ENCODE measurements at regions of chrX and their contacts with region 1.

Region 1: DNA sequence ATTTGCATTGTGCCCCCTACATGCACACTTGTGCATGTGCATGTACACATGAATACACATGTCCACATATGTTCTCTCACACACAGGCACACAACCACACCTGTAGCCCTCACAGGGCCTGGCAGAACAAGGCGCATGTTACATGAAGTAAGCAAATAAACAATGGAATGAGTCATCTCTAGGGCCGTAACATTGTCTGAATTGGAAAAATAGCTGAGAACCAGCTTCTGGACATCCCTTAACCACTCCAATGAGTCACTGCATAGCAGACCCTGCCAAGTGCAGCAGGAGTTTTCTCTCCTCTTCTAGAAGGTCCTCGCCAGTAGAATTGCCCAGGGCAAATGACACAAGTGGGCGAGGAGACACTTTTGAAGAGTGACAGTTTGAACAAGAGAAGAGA is 66.1 kb downstream of the MAGEA10 start:
- DNase-seq: no peak

Region 2: GRCh38 chrX:151974336-151975227 is 97.7 kb before region 1 on chrX and contains the start of gene GABRE:
- intact Hi-C with region 1: loop called (anchors 10 kb)
- DNase-seq: peak; percentile 82
- total RNA-seq, gene GABRE: 54.0 TPM